PC-3 (cell line): ENCODE measurements at regions of chr17 and their contacts with region 1.

Region 1: GRCh38 chr17:7266784-7267183 is 4.5 kb upstream of the CLDN7 start:
- DNase-seq: no peak
- ATAC-seq: no peak; the same call in 1 of the 2 replicates
- H3K4me3 ChIP-seq: no peak overlapping the region
- H3K27ac ChIP-seq: no peak overlapping the region
- H3K4me1 ChIP-seq: peaks cover 15% of the 10 kb centered on the region
- H3K27me3 ChIP-seq: no peaks in the 10 kb centered on the region
- CTCF ChIP-seq: no peak

Region 2: DNA sequence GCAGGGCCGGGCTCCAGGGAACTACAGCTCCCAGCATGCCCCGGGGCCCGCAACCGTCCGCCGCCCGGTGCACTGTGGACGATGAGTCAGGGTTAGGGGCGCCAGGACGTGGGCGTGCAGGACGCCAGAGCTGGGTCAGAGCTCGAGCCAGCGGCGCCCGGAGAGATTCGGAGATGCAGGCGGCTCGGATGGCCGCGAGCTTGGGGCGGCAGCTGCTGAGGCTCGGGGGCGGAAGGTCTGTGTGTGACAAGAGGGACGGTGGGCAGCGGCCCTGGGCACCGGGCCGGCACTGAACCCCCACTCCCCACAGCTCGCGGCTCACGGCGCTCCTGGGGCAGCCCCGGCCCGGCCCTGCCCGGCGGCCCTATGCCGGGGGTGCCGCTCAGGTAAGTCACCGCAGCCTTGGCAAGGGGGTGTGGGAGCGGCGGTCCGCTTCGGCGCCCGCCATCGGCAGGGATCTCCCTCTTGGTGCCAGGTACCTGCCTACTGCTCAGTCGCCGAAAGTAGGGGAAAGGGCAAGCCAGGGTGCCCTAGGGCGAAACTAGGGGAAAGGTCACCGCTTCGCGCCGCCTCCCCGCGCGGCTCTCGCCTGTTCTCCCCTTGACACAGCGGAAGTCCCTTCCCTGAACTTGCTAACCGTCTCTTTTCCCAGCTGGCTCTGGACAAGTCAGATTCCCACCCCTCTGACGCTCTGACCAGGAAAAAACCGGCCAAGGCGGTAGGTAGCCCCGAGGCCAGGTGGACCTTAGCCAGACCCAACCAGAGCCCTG is 46.8 kb before region 1 on chr17 and contains the starts of genes ACADVL and DLG4:
- CTCF ChIA-PET with region 1: no interaction called
- POLR2A ChIA-PET with region 1: no interaction called
- intact Hi-C with region 1: no loop called
- DNase-seq: peak; percentile 85
- ATAC-seq: peak; percentile 66
- H3K4me3 ChIP-seq: peak within 1 kb of the TSS; percentile 81
- H3K27ac ChIP-seq: peak within 1 kb of the TSS; percentile 97
- H3K4me1 ChIP-seq: peaks cover 34% of the 10 kb centered on the region
- H3K27me3 ChIP-seq: no peaks in the 10 kb centered on the region
- CTCF ChIP-seq: no peak
- total RNA-seq, gene ACADVL: 558 and 646 TPM in 2 replicates
- total RNA-seq, gene DLG4: 6.5 and 12.8 TPM in 2 replicates

Region 3: GRCh38 chr17:7243838-7244378 is 22.9 kb before region 1 on chr17:
- CTCF ChIA-PET with region 1: no interaction called
- POLR2A ChIA-PET with region 1: no interaction called
- intact Hi-C with region 1: no loop called
- DNase-seq: no peak
- ATAC-seq: no peak
- H3K4me3 ChIP-seq: no peak overlapping the region
- H3K27ac ChIP-seq: no peak overlapping the region
- H3K4me1 ChIP-seq: peaks cover 17% of the 10 kb centered on the region
- H3K27me3 ChIP-seq: no peaks in the 10 kb centered on the region
- CTCF ChIP-seq: no peak

Region 4: GRCh38 chr17:7548585-7549400 is 282.0 kb after region 1 on chr17 and contains the start of gene TNFSF12:
- CTCF ChIA-PET with region 1: no interaction called
- POLR2A ChIA-PET with region 1: interaction called, 17 read pairs
- intact Hi-C with region 1: no loop called
- DNase-seq: peak; percentile 31
- ATAC-seq: peak; percentile 81
- H3K4me3 ChIP-seq: peak within 1 kb of the TSS; percentile 87
- H3K27ac ChIP-seq: no peak within 1 kb of the TSS
- H3K4me1 ChIP-seq: peaks cover 9% of the 10 kb centered on the region; the same call in 1 of the 2 replicates
- H3K27me3 ChIP-seq: no peaks in the 10 kb centered on the region
- CTCF ChIP-seq: no peak
- total RNA-seq, gene TNFSF12: 15.2 and 24.2 TPM in 2 replicates